HEK293 (cell line): ENCODE measurements at regions of chr15 and their contacts with region 1.

Region 1: GRCh38 chr15:32663671-32664070 is 22.2 kb downstream of the SCG5 start:
- H3K4me3 ChIP-seq: no peak overlapping the region
- H3K27ac ChIP-seq: no peak overlapping the region
- H3K4me1 ChIP-seq: no peaks in the 10 kb centered on the region
- CTCF ChIP-seq: no peak

Region 2: GRCh38 chr15:32781781-32782180 is 118.1 kb after region 1 on chr15:
- CTCF ChIA-PET with region 1: no interaction called
- POLR2A ChIA-PET with region 1: no interaction called
- H3K4me3 ChIP-seq: no peak overlapping the region
- H3K27ac ChIP-seq: no peak overlapping the region
- H3K4me1 ChIP-seq: no peaks in the 10 kb centered on the region
- CTCF ChIP-seq: no peak

Region 3: DNA sequence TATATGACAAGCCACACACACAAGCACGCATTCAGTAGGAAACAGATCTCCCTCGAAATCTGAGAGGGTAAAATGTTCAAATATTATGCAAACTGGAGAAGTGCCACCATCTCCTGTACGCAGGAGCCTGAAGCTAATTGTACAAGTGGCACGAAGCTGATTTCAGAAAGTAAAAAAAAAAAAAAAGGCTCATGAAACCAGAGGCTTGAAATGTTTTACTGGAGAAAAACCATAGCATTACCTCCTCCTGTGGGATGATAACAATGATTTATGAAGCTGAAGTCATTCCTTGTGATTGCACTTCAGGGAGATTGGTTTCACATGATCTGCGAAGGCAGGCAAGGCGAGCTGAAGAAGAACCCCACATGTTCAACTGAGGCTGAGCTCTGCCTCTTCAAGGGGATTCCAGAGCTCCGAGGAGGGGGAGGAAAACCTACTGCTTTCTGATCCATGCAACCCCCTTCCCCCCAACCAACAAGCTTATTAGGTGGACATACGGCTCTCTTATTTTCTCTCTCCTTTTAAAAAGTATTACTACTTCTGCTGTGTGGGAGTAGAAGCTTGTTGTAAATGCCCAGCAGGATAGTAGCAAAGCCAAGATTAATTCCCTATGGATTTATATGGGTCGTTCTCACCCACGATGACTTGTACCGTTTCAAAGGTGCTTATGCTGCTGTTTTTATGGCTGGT is 155.2 kb after region 1 on chr15:
- CTCF ChIA-PET with region 1: interaction called, 10 read pairs
- POLR2A ChIA-PET with region 1: no interaction called
- H3K4me3 ChIP-seq: peak overlapping the region; percentile 6
- H3K27ac ChIP-seq: peak overlapping the region; percentile 96
- H3K4me1 ChIP-seq: peaks cover 18% of the 10 kb centered on the region
- CTCF ChIP-seq: no peak

Region 4: GRCh38 chr15:32936283-32936918 is 272.7 kb after region 1 on chr15:
- CTCF ChIA-PET with region 1: interaction called, 18 read pairs
- POLR2A ChIA-PET with region 1: no interaction called
- H3K4me3 ChIP-seq: no peak overlapping the region
- H3K27ac ChIP-seq: no peak overlapping the region
- H3K4me1 ChIP-seq: no peaks in the 10 kb centered on the region
- CTCF ChIP-seq: no peak

Region 5: DNA sequence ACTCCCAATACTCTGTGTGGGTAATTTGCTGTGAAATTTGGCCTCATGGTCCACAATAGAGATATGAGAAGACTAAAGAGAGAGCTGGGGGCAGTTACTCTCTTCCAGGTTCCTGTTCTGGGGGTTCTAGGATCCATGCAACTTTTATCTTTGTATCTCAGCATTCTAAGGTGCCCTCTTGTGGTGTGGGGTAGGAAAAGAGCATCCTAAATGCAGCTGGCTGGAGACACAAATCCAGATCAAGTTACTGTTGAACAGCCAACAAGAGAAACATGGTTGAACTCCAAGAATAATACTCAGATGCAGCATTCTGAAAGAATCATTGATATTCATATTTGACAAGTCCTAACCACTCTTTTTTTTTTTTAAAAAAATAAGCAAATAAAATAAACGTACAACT is 292.3 kb after region 1 on chr15:
- CTCF ChIA-PET with region 1: interaction called, 13 read pairs
- POLR2A ChIA-PET with region 1: no interaction called
- H3K4me3 ChIP-seq: no peak overlapping the region
- H3K27ac ChIP-seq: no peak overlapping the region
- H3K4me1 ChIP-seq: no peaks in the 10 kb centered on the region
- CTCF ChIP-seq: no peak

Region 6: DNA sequence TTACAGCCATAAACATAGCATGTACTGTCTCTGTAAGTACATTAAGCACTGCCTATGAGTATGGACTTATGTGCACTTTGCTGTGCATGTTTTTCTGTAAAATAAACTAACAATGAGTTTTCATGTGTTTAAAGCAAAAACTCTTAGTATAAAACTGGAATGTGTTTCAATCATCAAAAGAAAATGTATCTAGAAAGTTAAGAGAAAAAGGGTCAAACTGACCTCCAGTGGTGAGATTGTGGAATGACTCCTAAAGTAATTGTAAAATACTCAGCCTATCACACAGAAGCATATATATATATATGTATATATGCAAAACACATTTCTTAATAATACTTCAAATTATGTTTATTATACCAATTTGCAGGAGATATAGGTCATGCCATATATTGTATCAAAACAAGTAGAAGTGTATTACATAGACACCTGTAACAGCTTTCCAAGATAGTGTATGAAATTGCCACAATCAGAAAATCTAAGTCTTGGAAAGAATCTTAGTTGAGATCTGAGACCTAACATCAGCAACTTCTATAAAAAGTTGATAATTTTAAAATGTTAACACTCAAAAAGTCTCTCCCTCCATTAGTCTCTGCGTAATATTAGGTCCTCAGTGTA is 331.2 kb after region 1 on chr15:
- CTCF ChIA-PET with region 1: interaction called, 80 read pairs
- POLR2A ChIA-PET with region 1: no interaction called
- H3K4me3 ChIP-seq: no peak overlapping the region
- H3K27ac ChIP-seq: no peak overlapping the region
- H3K4me1 ChIP-seq: peaks cover 5% of the 10 kb centered on the region
- CTCF ChIP-seq: no peak